AG04450 (cell line): ENCODE measurements at regions of chr6 and their contacts with region 1.

Region 1: GRCh38 chr6:106223300-106223930 is 102.1 kb downstream of the ATG5 start:
- DNase-seq: peak; percentile 54
- H3K4me3 ChIP-seq: no peak overlapping the region
- H3K27ac ChIP-seq: no peak overlapping the region
- H3K27me3 ChIP-seq: no peaks in the 10 kb centered on the region
- CTCF ChIP-seq: peak; percentile 69

Region 2: GRCh38 chr6:105484238-105485161 is 738.9 kb before region 1 on chr6:
- CTCF ChIA-PET with region 1: interaction called, 42 read pairs
- POLR2A ChIA-PET with region 1: no interaction called
- DNase-seq: no peak
- H3K4me3 ChIP-seq: no peak overlapping the region
- H3K27ac ChIP-seq: no peak overlapping the region
- H3K27me3 ChIP-seq: no peaks in the 10 kb centered on the region
- CTCF ChIP-seq: peak; percentile 94

Region 3: GRCh38 chr6:105882121-105882803 is 341.2 kb before region 1 on chr6:
- CTCF ChIA-PET with region 1: interaction called, 11 read pairs
- POLR2A ChIA-PET with region 1: no interaction called
- DNase-seq: peak; percentile 54
- H3K4me3 ChIP-seq: no peak overlapping the region
- H3K27ac ChIP-seq: no peak overlapping the region
- H3K27me3 ChIP-seq: no peaks in the 10 kb centered on the region
- CTCF ChIP-seq: no peak

Region 4: DNA sequence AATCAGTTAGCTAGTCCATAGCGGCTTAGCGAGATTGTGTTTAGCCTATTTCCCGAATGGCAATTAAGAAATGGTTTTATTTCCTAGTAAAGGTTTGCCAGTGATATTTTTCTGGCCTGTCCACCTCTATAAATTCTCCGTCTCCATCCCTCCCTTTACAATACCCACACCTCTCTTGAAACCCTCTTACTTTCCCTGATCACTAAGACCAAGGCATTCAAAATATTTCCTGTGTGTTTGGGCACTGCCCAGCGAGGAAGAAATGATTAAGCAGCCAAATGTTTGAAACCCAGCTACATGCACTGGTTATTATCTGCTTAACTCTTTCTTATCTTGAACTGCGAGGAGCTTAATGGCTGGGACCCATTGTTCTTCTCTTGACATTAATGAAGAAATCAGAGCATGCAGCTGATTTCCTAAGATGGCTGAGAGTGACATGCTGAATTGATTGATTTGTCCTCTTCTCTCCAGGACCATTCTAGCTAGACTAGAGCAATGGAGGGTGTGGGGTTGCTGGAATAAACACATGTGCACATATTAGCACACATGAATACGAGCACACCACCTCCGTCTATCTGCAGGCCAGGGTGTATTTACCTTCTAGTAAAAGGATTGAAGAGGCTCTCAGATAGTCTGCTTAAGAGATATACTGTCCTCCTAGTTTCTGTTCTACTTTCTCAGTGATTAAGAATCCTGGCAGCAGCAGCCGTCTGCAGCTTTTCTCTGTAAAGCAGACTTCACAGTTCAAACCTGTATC is 183.4 kb before region 1 on chr6:
- CTCF ChIA-PET with region 1: no interaction called
- POLR2A ChIA-PET with region 1: no interaction called
- DNase-seq: no peak
- H3K4me3 ChIP-seq: no peak overlapping the region
- H3K27ac ChIP-seq: no peak overlapping the region
- H3K27me3 ChIP-seq: no peaks in the 10 kb centered on the region
- CTCF ChIP-seq: no peak

Region 5: DNA sequence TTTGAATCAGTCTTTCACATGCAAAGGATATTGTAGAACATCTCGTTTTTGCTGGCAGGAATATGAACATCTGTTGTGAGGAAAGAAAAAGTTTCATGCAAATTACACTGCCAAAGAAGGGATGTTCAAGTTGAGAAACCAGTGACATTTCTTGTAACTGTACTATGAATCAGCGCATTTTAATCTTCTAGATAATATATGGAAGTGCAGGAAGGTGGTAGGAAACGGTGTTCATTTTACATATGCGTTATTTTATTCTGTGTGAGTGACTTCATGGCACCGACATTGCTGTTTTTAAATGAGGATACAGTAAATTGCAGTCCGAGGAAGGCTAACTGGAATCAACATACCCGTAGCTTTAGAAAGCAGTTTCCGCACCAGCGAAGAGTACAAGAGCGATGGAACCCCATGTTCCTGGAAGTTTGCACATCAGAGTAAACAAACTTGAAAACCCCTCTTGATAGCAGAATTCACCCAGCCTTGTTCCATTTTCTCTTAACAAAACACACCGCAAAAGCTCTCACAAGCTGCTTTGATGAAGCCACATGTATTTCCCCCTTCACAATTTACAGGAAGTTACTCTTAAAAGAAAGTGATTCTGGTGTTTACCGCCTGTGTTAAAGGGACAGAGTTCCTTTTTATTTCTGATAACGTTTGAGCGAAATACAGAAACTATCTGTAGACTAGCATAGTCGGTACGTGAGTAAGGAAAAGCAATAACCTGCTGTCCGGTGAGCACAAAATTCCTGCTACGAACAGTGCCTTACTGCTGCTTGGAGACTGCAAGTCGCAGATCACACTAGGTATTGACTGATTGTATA is 125.8 kb before region 1 on chr6:
- CTCF ChIA-PET with region 1: interaction called, 45 read pairs
- POLR2A ChIA-PET with region 1: no interaction called
- DNase-seq: no peak
- H3K4me3 ChIP-seq: peak overlapping the region; percentile 59
- H3K27ac ChIP-seq: peak overlapping the region; percentile 90
- H3K27me3 ChIP-seq: no peaks in the 10 kb centered on the region
- CTCF ChIP-seq: no peak

Region 6: GRCh38 chr6:106206905-106207304 is 16.5 kb before region 1 on chr6:
- CTCF ChIA-PET with region 1: interaction called, 47 read pairs
- POLR2A ChIA-PET with region 1: no interaction called
- DNase-seq: no peak
- H3K4me3 ChIP-seq: no peak overlapping the region
- H3K27ac ChIP-seq: no peak overlapping the region
- H3K27me3 ChIP-seq: no peaks in the 10 kb centered on the region
- CTCF ChIP-seq: no peak

Region 7: DNA sequence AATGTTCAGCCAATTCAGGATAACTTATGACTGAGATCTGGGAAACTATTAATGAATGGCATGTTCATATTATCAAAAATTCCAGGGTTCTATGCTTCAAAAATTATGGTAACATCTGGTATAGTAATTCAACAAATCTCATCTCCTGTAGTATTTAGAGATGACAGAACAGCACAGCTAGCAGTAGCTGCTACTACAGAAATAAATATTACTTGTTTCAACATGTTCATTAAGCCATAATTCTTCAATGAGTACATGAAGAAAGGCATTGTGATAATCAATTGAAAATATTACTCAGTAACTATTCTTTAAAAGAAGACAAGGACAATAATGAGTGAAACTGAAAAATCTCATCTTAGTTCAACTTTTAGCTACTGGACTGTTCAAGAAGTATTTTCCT is 35.3 kb after region 1 on chr6:
- CTCF ChIA-PET with region 1: interaction called, 21 read pairs
- POLR2A ChIA-PET with region 1: no interaction called
- DNase-seq: no peak
- H3K4me3 ChIP-seq: no peak overlapping the region
- H3K27ac ChIP-seq: no peak overlapping the region
- H3K27me3 ChIP-seq: no peaks in the 10 kb centered on the region
- CTCF ChIP-seq: no peak

Region 8: GRCh38 chr6:106390088-106390487 is 166.7 kb after region 1 on chr6:
- CTCF ChIA-PET with region 1: no interaction called
- POLR2A ChIA-PET with region 1: no interaction called
- DNase-seq: no peak
- H3K4me3 ChIP-seq: no peak overlapping the region
- H3K27ac ChIP-seq: no peak overlapping the region
- H3K27me3 ChIP-seq: no peaks in the 10 kb centered on the region
- CTCF ChIP-seq: no peak